ENCODE measurements at regions of chr12 and their contacts with region 1.

Region 1: GRCh38 chr12:45543906-45544315 is 185.6 kb upstream of the ARID2 start:
- DNase-seq: peak; percentile 69
- ATAC-seq: peak; percentile 97
- H3K4me3 Mint-ChIP-seq: no peak overlapping the region
- H3K27ac Mint-ChIP-seq: no peak overlapping the region
- H3K4me1 Mint-ChIP-seq: peaks cover 4% of the 10 kb centered on the region
- H3K27me3 Mint-ChIP-seq: peaks cover 5% of the 10 kb centered on the region
- CTCF ChIP-seq: peak; percentile 80

Region 2: DNA sequence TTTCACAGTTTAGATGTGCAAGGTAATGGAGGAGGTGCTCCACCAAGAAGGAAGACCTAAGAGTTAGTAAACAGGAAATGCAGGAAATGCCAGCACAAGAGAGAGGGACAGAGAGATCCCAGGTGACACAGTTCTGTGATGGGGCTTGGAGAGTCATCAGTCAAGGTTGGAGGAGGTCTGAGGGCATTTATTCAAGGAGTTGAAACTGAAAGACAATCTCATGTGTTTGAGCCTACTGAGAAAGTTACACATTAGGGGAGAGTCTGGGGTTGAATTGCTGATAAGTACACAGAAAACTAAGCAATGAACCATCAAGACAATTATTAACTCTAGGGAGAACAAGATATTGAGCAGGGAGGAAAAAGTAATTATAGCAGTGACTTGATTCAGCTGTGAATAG is 189.5 kb before region 1 on chr12:
- CTCF ChIA-PET with region 1: no interaction called
- POLR2A ChIA-PET with region 1: no interaction called
- intact Hi-C with region 1: no loop called
- DNase-seq: no peak
- ATAC-seq: no peak
- H3K4me3 Mint-ChIP-seq: no peak overlapping the region
- H3K27ac Mint-ChIP-seq: no peak overlapping the region
- H3K4me1 Mint-ChIP-seq: peaks cover 4% of the 10 kb centered on the region
- H3K27me3 Mint-ChIP-seq: no peaks in the 10 kb centered on the region
- CTCF ChIP-seq: no peak

Region 3: DNA sequence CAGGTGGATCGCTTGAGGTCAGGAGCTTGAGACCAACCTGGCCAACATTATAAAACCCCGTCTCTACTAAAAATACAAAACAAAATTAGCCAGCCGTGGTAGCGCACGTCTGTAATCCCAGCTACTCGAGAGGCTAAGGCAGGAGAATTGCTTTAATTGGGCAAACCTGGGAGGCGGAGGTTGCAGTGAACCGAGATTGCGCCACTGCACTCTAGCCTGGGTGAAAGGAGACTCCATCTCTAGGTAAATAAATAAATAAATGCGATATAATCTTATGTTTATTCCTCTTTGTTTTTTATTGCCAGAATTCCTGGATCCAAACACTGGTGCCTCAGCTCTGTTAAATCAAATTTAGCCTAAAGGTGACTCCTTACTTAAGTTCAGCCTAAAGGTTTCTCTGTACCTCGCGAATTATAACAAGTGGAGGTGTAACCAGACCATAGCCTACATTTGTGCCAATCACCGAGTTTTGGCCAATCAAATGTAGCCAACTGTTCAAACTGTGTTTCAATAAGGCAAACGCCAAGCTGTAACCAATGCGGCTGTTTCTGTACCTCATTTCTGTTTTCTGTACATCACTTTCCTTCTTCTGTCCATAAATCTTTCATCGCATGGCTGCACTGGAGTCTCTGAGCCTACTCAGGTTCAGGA is 60.5 kb after region 1 on chr12:
- CTCF ChIA-PET with region 1: no interaction called
- POLR2A ChIA-PET with region 1: no interaction called
- intact Hi-C with region 1: no loop called
- DNase-seq: no peak
- ATAC-seq: no peak
- H3K4me3 Mint-ChIP-seq: no peak overlapping the region
- H3K27ac Mint-ChIP-seq: no peak overlapping the region
- H3K4me1 Mint-ChIP-seq: no peaks in the 10 kb centered on the region
- H3K27me3 Mint-ChIP-seq: peaks cover 1% of the 10 kb centered on the region
- CTCF ChIP-seq: no peak

Region 4: GRCh38 chr12:45655201-45655600 is 111.3 kb after region 1 on chr12:
- CTCF ChIA-PET with region 1: interaction called, 13 read pairs
- POLR2A ChIA-PET with region 1: no interaction called
- intact Hi-C with region 1: no loop called
- DNase-seq: peak; percentile 73
- ATAC-seq: peak; percentile 100
- H3K4me3 Mint-ChIP-seq: no peak overlapping the region
- H3K27ac Mint-ChIP-seq: no peak overlapping the region
- H3K4me1 Mint-ChIP-seq: peaks cover 5% of the 10 kb centered on the region
- H3K27me3 Mint-ChIP-seq: peaks cover 19% of the 10 kb centered on the region
- CTCF ChIP-seq: peak; percentile 32

Region 5: DNA sequence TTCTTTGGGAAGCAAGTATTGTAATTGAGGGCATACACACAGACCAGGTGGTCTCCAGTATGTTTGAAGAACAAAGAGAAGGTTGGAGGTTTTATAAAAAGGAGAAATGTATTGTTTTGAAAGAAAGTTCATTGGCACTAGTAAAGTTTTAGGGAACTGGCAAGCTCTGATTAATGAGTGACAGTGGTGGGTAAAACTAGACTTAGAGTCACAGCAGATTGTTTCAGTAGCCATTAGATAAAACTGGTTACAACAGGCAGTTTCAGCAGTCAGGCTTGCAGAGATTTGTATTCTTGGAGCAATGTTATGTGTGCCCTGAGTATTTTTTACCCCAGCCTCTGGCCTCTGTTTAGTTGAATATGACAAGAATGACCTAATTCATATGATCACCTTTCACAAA is 136.5 kb after region 1 on chr12:
- CTCF ChIA-PET with region 1: interaction called, 11 read pairs
- POLR2A ChIA-PET with region 1: no interaction called
- intact Hi-C with region 1: no loop called
- DNase-seq: no peak
- ATAC-seq: no peak
- H3K4me3 Mint-ChIP-seq: no peak overlapping the region
- H3K27ac Mint-ChIP-seq: no peak overlapping the region
- H3K4me1 Mint-ChIP-seq: peaks cover 6% of the 10 kb centered on the region
- H3K27me3 Mint-ChIP-seq: peaks cover 5% of the 10 kb centered on the region
- CTCF ChIP-seq: no peak

Region 6: GRCh38 chr12:45745861-45746277 is 202.0 kb after region 1 on chr12:
- CTCF ChIA-PET with region 1: interaction called, 9 read pairs
- POLR2A ChIA-PET with region 1: no interaction called
- intact Hi-C with region 1: loop called (anchors 5 kb)
- DNase-seq: no peak
- ATAC-seq: peak; percentile 51
- H3K4me3 Mint-ChIP-seq: no peak overlapping the region
- H3K27ac Mint-ChIP-seq: no peak overlapping the region
- H3K4me1 Mint-ChIP-seq: peaks cover 56% of the 10 kb centered on the region
- H3K27me3 Mint-ChIP-seq: no peaks in the 10 kb centered on the region
- CTCF ChIP-seq: peak; percentile 57

Measured in activated CD8-positive, alpha-beta T cell treated with anti-CD3 and anti-CD28 coated beads for 36 hours (primary cell).